Breast epithelium (tissue), 4 donors: ENCODE measurements at regions of chr7 and their contacts with region 1.

Region 1: GRCh38 chr7:49080896-49081475 is 156.6 kb downstream of the CDC14C start:
- DNase-seq: no peak
- H3K4me3 ChIP-seq: no peak overlapping the region
- H3K27ac ChIP-seq: no peak overlapping the region
- H3K4me1 ChIP-seq: no peaks in the 10 kb centered on the region
- H3K27me3 ChIP-seq: no peaks in the 10 kb centered on the region
- CTCF ChIP-seq: no peak
- POLR2A ChIP-seq: no peak

Region 2: GRCh38 chr7:47999418-47999817 is 1081.6 kb before region 1 on chr7:
- intact Hi-C with region 1: no loop called
- DNase-seq: no peak
- H3K4me3 ChIP-seq: no peak overlapping the region
- H3K27ac ChIP-seq: no peak overlapping the region
- H3K4me1 ChIP-seq: no peaks in the 10 kb centered on the region
- H3K27me3 ChIP-seq: no peaks in the 10 kb centered on the region
- CTCF ChIP-seq: no peak
- POLR2A ChIP-seq: no peak

Region 3: GRCh38 chr7:49037348-49038210 is 43.4 kb before region 1 on chr7:
- intact Hi-C with region 1: loop called (anchors 2 kb)
- DNase-seq: no peak
- H3K4me3 ChIP-seq: no peak overlapping the region
- H3K27ac ChIP-seq: no peak overlapping the region
- H3K4me1 ChIP-seq: no peaks in the 10 kb centered on the region
- H3K27me3 ChIP-seq: no peaks in the 10 kb centered on the region
- CTCF ChIP-seq: no peak
- POLR2A ChIP-seq: no peak